CD4-positive, alpha-beta T cell (primary cell): ENCODE measurements at regions of chr12 and their contacts with region 1.

Region 1: DNA sequence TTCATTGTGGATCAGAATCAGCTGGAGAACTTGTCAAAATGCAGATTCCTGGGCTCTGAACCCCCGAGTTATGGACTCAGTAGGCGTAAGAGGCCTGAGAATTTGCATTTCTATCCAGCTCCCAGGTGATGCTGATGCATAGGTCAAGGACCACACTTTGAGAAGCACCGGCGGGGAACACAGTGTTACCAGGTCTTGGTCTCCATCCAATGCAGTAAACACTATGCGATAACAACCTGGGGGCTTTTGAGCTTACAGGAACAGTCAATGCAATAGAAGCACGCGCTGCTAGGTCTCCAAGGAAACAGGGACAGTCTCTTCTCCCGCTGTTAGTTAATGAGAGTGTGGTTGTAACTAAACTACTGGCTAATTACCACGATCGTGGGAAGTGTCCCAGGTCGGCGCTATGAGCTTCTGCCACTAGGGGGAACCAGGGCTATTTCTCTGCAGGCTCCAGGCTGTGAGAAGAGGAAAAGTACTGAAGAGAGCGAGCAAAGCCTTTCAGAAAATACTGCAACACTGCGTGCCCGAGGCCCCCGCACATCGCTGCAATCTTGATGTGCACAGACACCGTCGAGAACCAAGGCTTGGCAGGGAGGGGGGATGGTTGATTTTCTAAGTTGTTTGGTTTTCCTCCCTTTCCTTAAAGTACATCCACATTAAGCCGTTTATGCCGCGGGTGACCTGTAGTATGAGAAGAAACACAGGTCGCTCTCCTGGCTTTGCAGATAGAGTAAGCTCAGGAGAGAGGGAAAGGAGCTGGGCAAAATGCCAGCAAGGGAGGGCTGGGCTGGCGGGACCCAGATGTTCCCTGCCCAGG is 52.0 kb upstream of the KCNA1 start:
- DNase-seq: peak; percentile 47 to 78 (median 61)
- ATAC-seq: peak; percentile 92
- H3K4me3 ChIP-seq: peak overlapping the region; percentile 28
- H3K4me3 Mint-ChIP-seq: peak overlapping the region; percentile 68
- H3K27ac ChIP-seq: no peak overlapping the region
- H3K27ac Mint-ChIP-seq: no peak overlapping the region
- H3K4me1 ChIP-seq: peaks cover 16% of the 10 kb centered on the region
- H3K4me1 Mint-ChIP-seq: peaks cover 17% of the 10 kb centered on the region
- H3K27me3 ChIP-seq: peaks cover 0 to 9% of the 10 kb centered on the region in 2 experiments
- H3K27me3 Mint-ChIP-seq: peaks cover 32% of the 10 kb centered on the region
- CTCF ChIP-seq: peak; percentile 91

Region 2: GRCh38 chr12:4356041-4356327 is 501.7 kb before region 1 on chr12:
- CTCF ChIA-PET with region 1: no interaction called
- POLR2A ChIA-PET with region 1: no interaction called
- intact Hi-C with region 1: loop called in 1 of 2 experiments (anchors 10 kb)
- DNase-seq: peak in 13 of 14 experiments; percentile 7 to 57 (median 29)
- ATAC-seq: peak; percentile 32
- H3K4me3 ChIP-seq: no peak overlapping the region
- H3K4me3 Mint-ChIP-seq: no peak overlapping the region
- H3K27ac ChIP-seq: no peak overlapping the region
- H3K27ac Mint-ChIP-seq: no peak overlapping the region
- H3K4me1 ChIP-seq: peaks cover 3% of the 10 kb centered on the region
- H3K4me1 Mint-ChIP-seq: peaks cover 6% of the 10 kb centered on the region
- H3K27me3 ChIP-seq: no peaks in the 10 kb centered on the region
- H3K27me3 Mint-ChIP-seq: no peaks in the 10 kb centered on the region
- CTCF ChIP-seq: peak; percentile 22

Region 3: GRCh38 chr12:5003020-5003666 is 145.5 kb after region 1 on chr12:
- CTCF ChIA-PET with region 1: no interaction called
- POLR2A ChIA-PET with region 1: no interaction called
- intact Hi-C with region 1: loop called in 1 of 2 experiments (anchors 5 kb)
- DNase-seq: peak in 7 of 14 experiments; percentile 4 to 39 (median 24)
- ATAC-seq: no peak
- H3K4me3 ChIP-seq: no peak overlapping the region
- H3K4me3 Mint-ChIP-seq: no peak overlapping the region
- H3K27ac ChIP-seq: no peak overlapping the region
- H3K27ac Mint-ChIP-seq: no peak overlapping the region
- H3K4me1 ChIP-seq: no peaks in the 10 kb centered on the region
- H3K4me1 Mint-ChIP-seq: no peaks in the 10 kb centered on the region
- H3K27me3 ChIP-seq: peaks cover 0 to 3% of the 10 kb centered on the region in 2 experiments
- H3K27me3 Mint-ChIP-seq: peaks cover 32% of the 10 kb centered on the region
- CTCF ChIP-seq: peak; percentile 54

Region 4: GRCh38 chr12:5083955-5084849 is 226.5 kb after region 1 on chr12:
- CTCF ChIA-PET with region 1: no interaction called
- POLR2A ChIA-PET with region 1: no interaction called
- intact Hi-C with region 1: loop called (anchors 5 to 10 kb)
- DNase-seq: peak in 3 of 14 experiments; percentile 16 to 44 (median 39)
- ATAC-seq: no peak
- H3K4me3 ChIP-seq: no peak overlapping the region
- H3K4me3 Mint-ChIP-seq: no peak overlapping the region
- H3K27ac ChIP-seq: no peak overlapping the region
- H3K27ac Mint-ChIP-seq: no peak overlapping the region
- H3K4me1 ChIP-seq: no peaks in the 10 kb centered on the region
- H3K4me1 Mint-ChIP-seq: no peaks in the 10 kb centered on the region
- H3K27me3 ChIP-seq: no peaks in the 10 kb centered on the region
- H3K27me3 Mint-ChIP-seq: peaks cover 10% of the 10 kb centered on the region
- CTCF ChIP-seq: no peak

Region 5: DNA sequence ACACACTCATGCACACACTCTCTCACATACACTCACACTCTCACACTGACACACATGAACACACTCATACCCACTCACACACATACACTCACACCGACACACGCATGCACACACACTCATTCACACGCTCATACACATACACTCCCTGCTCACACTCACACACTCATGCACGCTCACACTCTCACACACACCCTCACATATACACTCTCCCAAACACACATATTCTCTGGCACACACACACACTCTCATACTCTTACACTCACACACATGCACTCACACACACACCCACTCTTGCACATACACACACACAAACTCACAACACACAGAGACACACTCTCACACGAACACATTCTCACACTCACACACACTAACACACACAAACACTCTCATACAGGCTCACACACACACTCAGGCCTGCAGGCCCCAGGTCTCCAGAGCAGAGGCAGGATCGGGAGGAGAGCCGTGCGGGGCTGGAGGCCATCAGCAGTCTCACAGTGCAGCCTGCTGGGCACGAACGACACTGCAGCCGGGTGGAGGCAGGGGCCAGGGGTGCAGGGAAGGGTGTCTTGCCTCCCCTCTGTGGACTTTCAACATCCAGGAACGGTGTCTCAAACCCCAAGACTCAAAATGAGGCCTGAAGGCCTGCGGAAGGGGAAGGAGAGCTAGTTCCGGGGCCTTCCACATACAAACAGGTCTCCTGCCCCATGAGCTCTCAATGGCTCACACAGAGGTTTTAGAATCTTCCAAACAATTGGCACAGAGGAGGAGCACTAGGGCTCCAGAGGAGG is 938.7 kb after region 1 on chr12:
- CTCF ChIA-PET with region 1: no interaction called
- POLR2A ChIA-PET with region 1: no interaction called
- intact Hi-C with region 1: loop called (anchors 5 kb)
- DNase-seq: peak in 4 of 14 experiments; percentile 2 to 29 (median 10)
- ATAC-seq: peak; percentile 41
- H3K4me3 ChIP-seq: no peak overlapping the region
- H3K4me3 Mint-ChIP-seq: no peak overlapping the region
- H3K27ac ChIP-seq: no peak overlapping the region
- H3K27ac Mint-ChIP-seq: no peak overlapping the region
- H3K4me1 ChIP-seq: no peaks in the 10 kb centered on the region
- H3K4me1 Mint-ChIP-seq: no peaks in the 10 kb centered on the region
- H3K27me3 ChIP-seq: no peaks in the 10 kb centered on the region
- H3K27me3 Mint-ChIP-seq: no peaks in the 10 kb centered on the region
- CTCF ChIP-seq: peak; percentile 27

Region 6: DNA sequence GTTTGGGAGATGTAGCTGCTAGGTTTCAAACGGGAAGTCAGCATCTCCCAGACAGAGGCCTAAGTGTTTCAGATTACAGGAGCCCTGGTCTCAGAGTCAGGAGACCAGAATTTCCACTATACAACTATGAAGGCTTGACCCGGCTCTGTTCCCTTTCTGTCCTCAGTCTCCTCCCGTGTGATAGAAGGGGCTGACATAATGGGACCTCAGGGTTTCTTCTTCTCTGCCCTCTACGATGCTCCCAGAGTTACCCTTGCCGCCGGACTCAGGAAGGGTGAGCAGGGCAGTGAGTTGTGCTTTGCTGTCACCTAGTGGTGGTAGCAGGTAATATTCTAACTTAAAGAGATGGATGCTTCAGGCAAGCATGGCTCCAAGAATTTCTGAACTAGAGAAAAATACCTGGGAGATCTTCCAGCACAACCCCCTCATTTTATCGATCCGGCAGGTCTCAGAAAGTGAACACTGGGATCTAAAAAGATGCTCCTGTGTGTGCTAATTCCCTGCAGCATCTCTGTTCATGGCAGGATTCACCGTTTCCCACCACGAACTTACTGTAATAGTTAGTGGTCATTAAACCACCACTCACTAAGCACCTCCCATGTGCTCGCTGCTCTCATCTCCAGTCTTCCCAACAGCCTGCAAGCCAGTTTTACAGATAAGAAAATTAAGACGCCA is 1182.3 kb after region 1 on chr12:
- CTCF ChIA-PET with region 1: no interaction called
- POLR2A ChIA-PET with region 1: no interaction called
- intact Hi-C with region 1: loop called in 1 of 2 experiments (anchors 10 kb)
- DNase-seq: peak in 12 of 14 experiments; percentile 11 to 78 (median 32)
- ATAC-seq: peak; percentile 84
- H3K4me3 ChIP-seq: no peak overlapping the region
- H3K4me3 Mint-ChIP-seq: no peak overlapping the region
- H3K27ac ChIP-seq: no peak overlapping the region
- H3K27ac Mint-ChIP-seq: no peak overlapping the region
- H3K4me1 ChIP-seq: peaks cover 5% of the 10 kb centered on the region
- H3K4me1 Mint-ChIP-seq: no peaks in the 10 kb centered on the region
- H3K27me3 ChIP-seq: peaks cover 0 to 2% of the 10 kb centered on the region in 2 experiments
- H3K27me3 Mint-ChIP-seq: no peaks in the 10 kb centered on the region
- CTCF ChIP-seq: peak; percentile 88

Region 7: DNA sequence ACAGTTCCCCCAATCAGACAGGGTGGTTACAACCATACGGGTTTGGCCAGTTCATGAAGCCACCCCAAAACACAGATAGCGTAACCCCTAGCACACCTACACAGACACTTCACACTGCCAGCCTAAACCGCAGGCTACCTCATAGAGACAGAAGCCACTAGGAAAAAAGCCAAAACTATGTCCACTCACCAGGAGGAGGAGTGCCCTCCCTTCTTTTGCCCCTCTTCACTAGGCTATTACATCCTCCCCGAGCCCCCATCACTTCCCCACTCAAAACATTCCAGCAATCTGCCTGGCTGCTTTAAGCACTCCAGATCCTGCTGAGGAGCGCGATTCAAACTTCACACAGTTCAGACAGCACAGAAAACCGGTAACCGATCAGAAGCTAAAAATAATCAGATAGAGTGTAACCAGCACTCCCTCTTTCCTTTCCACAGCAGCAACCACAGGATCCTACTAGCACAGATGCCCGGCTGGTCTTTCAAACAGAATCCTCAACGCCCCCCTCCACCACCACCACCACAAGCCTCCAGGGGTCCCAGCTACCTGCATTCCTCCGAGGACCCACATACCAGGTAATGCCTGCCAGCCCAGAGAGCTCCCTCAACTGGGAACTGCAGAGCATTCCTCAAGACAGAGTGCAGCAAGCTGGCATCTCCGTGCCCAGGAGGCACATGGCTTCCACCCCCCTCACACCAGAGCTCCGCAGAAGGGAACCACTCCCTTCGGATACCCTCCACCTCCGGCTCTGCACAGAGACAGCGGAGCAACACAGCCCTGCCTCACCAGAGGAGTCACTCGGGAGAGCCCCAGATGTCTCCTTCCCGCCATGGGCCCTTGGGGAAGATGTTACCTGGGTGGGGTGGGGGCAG is 1748.0 kb after region 1 on chr12:
- CTCF ChIA-PET with region 1: no interaction called
- POLR2A ChIA-PET with region 1: no interaction called
- intact Hi-C with region 1: no loop called
- DNase-seq: peak in 11 of 14 experiments; percentile 18 to 79 (median 52)
- ATAC-seq: peak; percentile 33
- H3K4me3 ChIP-seq: peak overlapping the region; percentile 66
- H3K4me3 Mint-ChIP-seq: no peak overlapping the region
- H3K27ac ChIP-seq: peak overlapping the region; percentile 79 to 94
- H3K27ac Mint-ChIP-seq: peak overlapping the region; percentile 88
- H3K4me1 ChIP-seq: peaks cover 61% of the 10 kb centered on the region
- H3K4me1 Mint-ChIP-seq: peaks cover 51% of the 10 kb centered on the region
- H3K27me3 ChIP-seq: no peaks in the 10 kb centered on the region
- H3K27me3 Mint-ChIP-seq: no peaks in the 10 kb centered on the region
- CTCF ChIP-seq: no peak